K562 (cell line): ENCODE measurements at regions of chr12 and their contacts with region 1.

Region 1: DNA sequence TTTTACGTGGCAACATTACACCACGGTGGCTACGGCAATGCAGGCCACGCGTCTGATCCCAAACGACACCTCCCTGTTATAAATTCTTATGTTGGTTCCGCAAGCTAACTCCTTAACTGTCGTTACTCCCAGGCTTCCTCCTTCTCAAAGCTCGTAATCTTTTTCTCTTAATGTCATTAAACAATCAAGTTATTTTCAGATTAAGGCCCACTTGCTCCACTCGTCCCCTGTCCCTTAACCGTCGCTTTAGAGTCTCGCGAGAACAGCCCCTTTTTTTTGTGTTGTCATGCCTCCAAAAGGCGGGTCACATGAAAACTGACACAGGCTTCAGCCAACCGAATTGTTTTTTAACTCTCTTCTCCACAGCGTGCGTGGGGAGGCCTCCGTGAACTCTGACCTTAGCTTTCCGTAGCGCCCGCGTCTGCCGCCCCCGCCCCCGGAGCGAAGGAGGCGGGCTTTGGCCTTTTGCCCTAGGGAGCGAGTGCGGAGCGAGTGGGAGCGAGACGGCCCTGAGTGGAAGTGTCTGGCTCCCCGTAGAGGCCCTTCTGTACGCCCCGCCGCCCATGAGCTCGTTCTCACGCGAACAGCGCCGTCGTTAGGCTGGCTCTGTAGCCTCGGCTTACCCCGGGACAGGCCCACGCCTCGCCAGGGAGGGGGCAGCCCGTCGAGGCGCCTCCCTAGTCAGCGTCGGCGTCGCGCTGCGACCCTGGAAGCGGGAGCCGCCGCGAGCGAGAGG is at the start of gene CAND1:
- DNase-seq: peak; percentile 86 to 98 (median 90)
- ATAC-seq: peak; percentile 83
- H3K4me3 ChIP-seq: peak within 1 kb of the TSS; percentile 90
- H3K27ac ChIP-seq: peak within 1 kb of the TSS; percentile 100
- H3K4me1 ChIP-seq: peaks cover 3 to 20% of the 10 kb centered on the region in 2 experiments; a peak in 4 of 5 replicates
- H3K27me3 ChIP-seq: no peaks in the 10 kb centered on the region
- CTCF ChIP-seq: peak in 2 of 3 experiments; percentile 1 to 30; a peak in 1 of 6 replicates
- EP300 ChIP-seq: peak; percentile 35; the same call in 1 of the 2 replicates
- POLR2A ChIP-seq: peak; percentile 87
- RAD21 ChIP-seq: 0 out of 4 replicates have a peak, but pooled peaks of 1 of the 2 experiments have one; percentile 13
- polyA plus RNA-seq, gene CAND1: 24.0 to 32.3 TPM

Region 2: GRCh38 chr12:67251012-67251411 is 18.1 kb before region 1 on chr12:
- CTCF ChIA-PET with region 1: no interaction called
- POLR2A ChIA-PET with region 1: interaction called, 11 read pairs
- in situ Hi-C with region 1: no loop called
- intact Hi-C with region 1: no loop called
- DNase-seq: no peak
- ATAC-seq: no peak
- H3K4me3 ChIP-seq: no peak overlapping the region
- H3K27ac ChIP-seq: no peak overlapping the region
- H3K4me1 ChIP-seq: no peaks in the 10 kb centered on the region
- H3K27me3 ChIP-seq: 0 out of 5 replicates have a peak, but pooled peaks cover 0 to 5% of the 10 kb centered on the region in 2 experiments
- CTCF ChIP-seq: no peak
- EP300 ChIP-seq: no peak
- POLR2A ChIP-seq: no peak
- RAD21 ChIP-seq: no peak

Region 3: DNA sequence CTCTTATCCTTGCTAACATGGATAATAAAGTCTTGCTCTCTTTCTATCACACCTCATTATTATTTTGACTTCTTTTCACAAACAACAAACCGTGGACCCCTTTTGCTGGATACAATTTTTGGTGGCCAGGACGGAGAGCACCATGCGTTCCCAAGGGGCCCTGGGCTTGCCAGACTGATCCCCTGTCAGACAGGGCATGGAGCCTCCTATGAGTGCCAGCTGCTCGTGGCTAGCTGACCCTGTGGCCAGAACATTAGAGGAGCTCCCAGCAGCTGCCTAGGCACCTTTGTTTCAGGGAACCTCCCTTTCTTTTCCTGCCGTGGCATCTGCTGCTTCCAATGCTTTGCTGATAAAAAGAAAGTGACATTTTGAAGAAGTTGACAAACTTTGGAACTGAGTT is 12.4 kb before region 1 on chr12:
- CTCF ChIA-PET with region 1: no interaction called
- POLR2A ChIA-PET with region 1: interaction called, 26 read pairs
- in situ Hi-C with region 1: no loop called
- intact Hi-C with region 1: no loop called
- DNase-seq: no peak
- ATAC-seq: peak; percentile 63
- H3K4me3 ChIP-seq: no peak overlapping the region
- H3K27ac ChIP-seq: no peak overlapping the region
- H3K4me1 ChIP-seq: no peaks in the 10 kb centered on the region
- H3K27me3 ChIP-seq: 0 out of 5 replicates have a peak, but pooled peaks cover 0 to 3% of the 10 kb centered on the region in 2 experiments
- CTCF ChIP-seq: no peak
- EP300 ChIP-seq: no peak
- POLR2A ChIP-seq: no peak
- RAD21 ChIP-seq: no peak

Region 4: GRCh38 chr12:67286257-67286656 is 17.2 kb after region 1 on chr12:
- CTCF ChIA-PET with region 1: no interaction called
- POLR2A ChIA-PET with region 1: interaction called, 27 read pairs
- in situ Hi-C with region 1: no loop called
- intact Hi-C with region 1: no loop called
- DNase-seq: no peak
- ATAC-seq: no peak
- H3K4me3 ChIP-seq: no peak overlapping the region
- H3K27ac ChIP-seq: no peak overlapping the region
- H3K4me1 ChIP-seq: no peaks in the 10 kb centered on the region; a peak in 1 of 5 replicates
- H3K27me3 ChIP-seq: no peaks in the 10 kb centered on the region
- CTCF ChIP-seq: no peak
- EP300 ChIP-seq: no peak
- POLR2A ChIP-seq: no peak
- RAD21 ChIP-seq: no peak

Region 5: DNA sequence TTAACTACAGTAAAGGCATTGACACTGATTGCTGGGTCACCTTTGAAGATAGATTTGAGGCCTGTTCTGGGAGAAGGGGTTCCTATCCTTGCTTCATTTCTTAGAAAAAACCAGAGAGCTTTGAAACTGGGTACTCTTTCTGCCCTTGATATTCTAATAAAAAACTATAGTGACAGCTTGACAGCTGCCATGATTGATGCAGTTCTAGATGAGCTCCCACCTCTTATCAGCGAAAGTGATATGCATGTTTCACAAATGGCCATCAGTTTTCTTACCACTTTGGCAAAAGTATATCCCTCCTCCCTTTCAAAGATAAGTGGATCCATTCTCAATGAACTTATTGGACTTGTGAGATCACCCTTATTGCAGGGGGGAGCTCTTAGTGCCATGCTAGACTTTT is 36.5 kb after region 1 on chr12:
- CTCF ChIA-PET with region 1: no interaction called
- POLR2A ChIA-PET with region 1: interaction called, 10 read pairs
- in situ Hi-C with region 1: no loop called
- intact Hi-C with region 1: no loop called
- DNase-seq: no peak
- ATAC-seq: no peak
- H3K4me3 ChIP-seq: no peak overlapping the region
- H3K27ac ChIP-seq: no peak overlapping the region
- H3K4me1 ChIP-seq: no peaks in the 10 kb centered on the region
- H3K27me3 ChIP-seq: no peaks in the 10 kb centered on the region
- CTCF ChIP-seq: no peak
- EP300 ChIP-seq: no peak
- POLR2A ChIP-seq: no peak
- RAD21 ChIP-seq: no peak